GM12878 (cell line): ENCODE measurements at regions of chr17 and their contacts with region 1.

Region 1: GRCh38 chr17:76816590-76817135 is 51.5 kb upstream of the MGAT5B start:
- DNase-seq: no peak
- ATAC-seq: peak; percentile 88
- H3K4me3 ChIP-seq: no peak overlapping the region
- H3K27ac ChIP-seq: no peak overlapping the region
- H3K4me1 ChIP-seq: no peaks in the 10 kb centered on the region
- H3K27me3 ChIP-seq: no peaks in the 10 kb centered on the region
- CTCF ChIP-seq: peak; percentile 78 to 86 (median 78)
- EP300 ChIP-seq: no peak
- POLR2A ChIP-seq: no peak
- RAD21 ChIP-seq: peak; percentile 68

Region 2: GRCh38 chr17:76797241-76797840 is 19.3 kb before region 1 on chr17:
- CTCF ChIA-PET with region 1: no interaction called
- POLR2A ChIA-PET with region 1: no interaction called
- RAD21 ChIA-PET with region 1: no interaction called
- SMC1A ChIA-PET with region 1: no interaction called
- in situ Hi-C with region 1: no loop called
- intact Hi-C with region 1: no loop called
- DNase-seq: no peak
- ATAC-seq: no peak
- H3K4me3 ChIP-seq: no peak overlapping the region
- H3K27ac ChIP-seq: no peak overlapping the region
- H3K4me1 ChIP-seq: no peaks in the 10 kb centered on the region
- H3K27me3 ChIP-seq: no peaks in the 10 kb centered on the region
- CTCF ChIP-seq: no peak
- EP300 ChIP-seq: no peak
- POLR2A ChIP-seq: no peak
- RAD21 ChIP-seq: no peak

Region 3: GRCh38 chr17:76843703-76844484 is 27.2 kb after region 1 on chr17:
- CTCF ChIA-PET with region 1: interaction called, 6 read pairs
- POLR2A ChIA-PET with region 1: no interaction called
- RAD21 ChIA-PET with region 1: no interaction called
- SMC1A ChIA-PET with region 1: interaction called, 3 read pairs
- in situ Hi-C with region 1: no loop called
- intact Hi-C with region 1: loop called (anchors 1 kb)
- DNase-seq: no peak
- ATAC-seq: no peak
- H3K4me3 ChIP-seq: no peak overlapping the region
- H3K27ac ChIP-seq: no peak overlapping the region
- H3K4me1 ChIP-seq: no peaks in the 10 kb centered on the region
- H3K27me3 ChIP-seq: peaks cover 4 to 9% of the 10 kb centered on the region in 2 experiments
- CTCF ChIP-seq: no peak
- EP300 ChIP-seq: no peak
- POLR2A ChIP-seq: no peak
- RAD21 ChIP-seq: no peak